ENCODE measurements at regions of chr7 and their contacts with region 1.

Region 1: GRCh38 chr7:10104292-10104691 is 869.4 kb upstream of the PHF14 start:
- DNase-seq: no peak
- ATAC-seq: no peak
- H3K4me3 ChIP-seq: no peak overlapping the region
- H3K27ac ChIP-seq: no peak overlapping the region
- H3K4me1 ChIP-seq: no peaks in the 10 kb centered on the region
- H3K27me3 ChIP-seq: no peaks in the 10 kb centered on the region
- CTCF ChIP-seq: no peak
- POLR2A ChIP-seq: no peak
- RAD21 ChIP-seq: no peak

Region 2: GRCh38 chr7:10156972-10157371 is 52.7 kb after region 1 on chr7:
- CTCF ChIA-PET with region 1: no interaction called
- POLR2A ChIA-PET with region 1: no interaction called
- RAD21 ChIA-PET with region 1: no interaction called
- intact Hi-C with region 1: loop called (anchors 5 kb)
- DNase-seq: no peak
- ATAC-seq: no peak
- H3K4me3 ChIP-seq: no peak overlapping the region
- H3K27ac ChIP-seq: no peak overlapping the region
- H3K4me1 ChIP-seq: no peaks in the 10 kb centered on the region
- H3K27me3 ChIP-seq: no peaks in the 10 kb centered on the region
- CTCF ChIP-seq: no peak
- POLR2A ChIP-seq: no peak
- RAD21 ChIP-seq: no peak

Measured in HCT116 (cell line).